ENCODE measurements at regions of chr11 and their contacts with region 1.

Region 1: DNA sequence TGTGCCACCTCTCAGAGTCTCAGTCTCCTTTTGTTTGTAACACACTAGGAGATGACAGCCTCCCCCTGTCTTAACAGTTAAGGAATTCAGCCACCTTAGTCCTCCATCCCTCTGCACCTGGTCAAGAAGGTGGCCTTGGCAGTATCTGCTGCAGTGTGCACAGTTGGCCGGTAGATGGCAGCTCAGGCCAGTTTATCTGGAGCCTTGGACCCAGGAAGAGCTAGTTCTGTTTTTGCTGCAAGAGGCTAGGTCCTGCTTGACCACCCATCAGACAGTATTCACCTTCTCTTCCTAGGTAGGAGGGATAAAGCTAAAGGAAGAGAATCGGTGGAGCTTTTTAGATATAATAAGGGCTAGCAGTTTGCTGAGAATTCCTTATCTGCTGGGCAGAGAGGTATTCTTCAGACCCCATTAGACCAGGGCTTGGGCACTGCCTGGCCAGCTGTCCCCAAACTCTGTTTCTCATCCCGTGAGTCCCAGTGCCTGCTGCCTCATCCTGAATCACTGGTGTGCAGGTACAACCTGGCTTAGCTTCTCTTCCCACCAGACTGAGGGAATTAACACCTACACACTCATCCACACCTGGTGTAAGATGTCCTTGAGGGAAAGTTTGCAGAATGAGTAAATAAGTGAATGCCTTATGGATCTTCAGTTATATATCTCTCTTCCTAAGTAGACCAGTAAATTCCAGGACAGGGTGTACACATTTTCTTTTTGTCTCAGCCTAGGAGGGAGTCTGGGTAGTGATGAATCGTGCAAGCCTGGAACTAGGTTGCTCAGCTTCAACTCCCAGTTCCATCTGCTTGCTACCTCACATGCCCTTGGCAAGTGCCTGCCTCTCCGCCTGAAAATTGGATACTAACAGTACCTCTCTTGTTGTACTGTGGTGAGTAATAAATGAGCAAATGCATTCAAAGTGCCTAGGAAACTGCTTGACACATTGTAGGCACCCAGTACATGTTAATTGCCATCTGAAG is 70.8 kb upstream of the NARS2 start:
- DNase-seq: peak; percentile 72
- ATAC-seq: peak; percentile 70
- H3K4me3 Mint-ChIP-seq: no peak overlapping the region
- H3K27ac Mint-ChIP-seq: no peak overlapping the region
- H3K4me1 Mint-ChIP-seq: peaks cover 33% of the 10 kb centered on the region
- H3K27me3 Mint-ChIP-seq: no peaks in the 10 kb centered on the region
- CTCF ChIP-seq: peak; percentile 97

Region 2: DNA sequence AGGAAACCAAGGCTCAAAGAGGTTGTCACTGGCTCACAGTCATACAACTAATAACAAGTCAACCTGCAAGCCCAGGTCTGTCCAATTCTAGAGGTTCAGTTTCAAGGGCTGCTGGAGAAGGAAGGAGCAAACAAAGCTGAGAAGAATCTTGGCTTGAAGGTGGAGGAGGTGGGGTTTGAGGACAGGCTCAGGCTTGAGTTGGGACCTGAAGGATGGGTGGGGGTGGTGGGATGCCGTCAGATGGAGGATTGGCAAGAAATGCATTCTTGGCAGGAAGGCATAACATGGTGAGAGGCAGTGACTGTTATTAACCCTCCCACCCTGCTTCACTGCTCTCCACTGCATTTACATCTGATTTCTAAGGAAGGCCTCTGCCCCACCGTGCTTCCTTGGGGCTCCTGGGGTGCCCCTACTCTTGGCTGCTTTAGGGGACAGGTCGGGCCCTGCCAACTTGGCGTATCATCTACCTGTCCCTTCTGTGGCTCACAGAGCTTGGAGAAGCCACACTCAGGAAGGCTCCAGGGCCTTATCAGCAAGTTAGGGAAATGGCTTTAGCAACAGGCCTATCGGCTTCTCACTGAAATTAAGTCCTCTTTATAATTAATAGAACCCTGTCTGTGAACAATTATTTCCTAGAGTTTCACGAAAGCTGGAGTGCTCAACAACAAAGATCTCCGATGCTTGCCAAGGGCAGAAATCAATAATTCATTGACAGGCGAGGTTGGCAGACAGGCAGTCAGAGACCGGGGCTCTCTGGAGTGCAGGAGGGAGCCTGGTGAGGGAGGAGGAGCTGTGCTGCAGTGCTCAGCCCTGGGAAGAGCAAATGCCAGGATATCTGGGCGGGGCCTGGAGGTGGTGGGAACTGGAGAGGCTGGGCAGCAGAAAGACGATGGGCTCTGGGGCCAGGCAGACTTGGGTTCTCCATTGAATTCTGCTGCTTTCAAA is 14.1 kb after region 1 on chr11:
- CTCF ChIA-PET with region 1: interaction called, 76 read pairs
- POLR2A ChIA-PET with region 1: no interaction called
- intact Hi-C with region 1: no loop called
- DNase-seq: no peak
- ATAC-seq: no peak
- H3K4me3 Mint-ChIP-seq: no peak overlapping the region
- H3K27ac Mint-ChIP-seq: no peak overlapping the region
- H3K4me1 Mint-ChIP-seq: peaks cover 3% of the 10 kb centered on the region
- H3K27me3 Mint-ChIP-seq: peaks cover 8% of the 10 kb centered on the region
- CTCF ChIP-seq: no peak

Region 3: DNA sequence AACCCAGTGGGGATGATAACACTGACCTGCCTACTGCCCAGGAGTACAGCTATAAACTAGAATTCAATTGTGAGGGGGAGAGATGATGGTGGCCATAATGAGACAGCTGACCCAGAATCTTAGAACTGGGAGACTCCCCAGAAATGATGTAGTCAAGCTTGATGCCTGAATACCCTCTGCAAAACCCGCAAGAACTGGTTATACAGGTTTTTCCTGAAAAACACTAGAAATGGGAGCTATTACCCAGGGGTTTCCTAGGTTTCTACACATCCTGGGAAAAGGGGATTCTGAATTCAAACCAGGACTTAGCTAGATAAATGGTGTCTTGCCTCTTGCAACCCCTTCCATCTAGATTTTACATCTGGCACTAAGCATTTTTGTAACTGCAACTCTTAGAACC is 43.0 kb after region 1 on chr11:
- CTCF ChIA-PET with region 1: interaction called, 11 read pairs
- POLR2A ChIA-PET with region 1: no interaction called
- intact Hi-C with region 1: no loop called
- DNase-seq: no peak
- ATAC-seq: no peak
- H3K4me3 Mint-ChIP-seq: no peak overlapping the region
- H3K27ac Mint-ChIP-seq: no peak overlapping the region
- H3K4me1 Mint-ChIP-seq: no peaks in the 10 kb centered on the region
- H3K27me3 Mint-ChIP-seq: peaks cover 18% of the 10 kb centered on the region
- CTCF ChIP-seq: no peak

Region 4: GRCh38 chr11:78722786-78723185 is 77.3 kb after region 1 on chr11:
- CTCF ChIA-PET with region 1: interaction called, 160 read pairs
- POLR2A ChIA-PET with region 1: no interaction called
- intact Hi-C with region 1: no loop called
- DNase-seq: no peak
- ATAC-seq: no peak
- H3K4me3 Mint-ChIP-seq: no peak overlapping the region
- H3K27ac Mint-ChIP-seq: no peak overlapping the region
- H3K4me1 Mint-ChIP-seq: no peaks in the 10 kb centered on the region
- H3K27me3 Mint-ChIP-seq: peaks cover 5% of the 10 kb centered on the region
- CTCF ChIP-seq: no peak

Region 5: DNA sequence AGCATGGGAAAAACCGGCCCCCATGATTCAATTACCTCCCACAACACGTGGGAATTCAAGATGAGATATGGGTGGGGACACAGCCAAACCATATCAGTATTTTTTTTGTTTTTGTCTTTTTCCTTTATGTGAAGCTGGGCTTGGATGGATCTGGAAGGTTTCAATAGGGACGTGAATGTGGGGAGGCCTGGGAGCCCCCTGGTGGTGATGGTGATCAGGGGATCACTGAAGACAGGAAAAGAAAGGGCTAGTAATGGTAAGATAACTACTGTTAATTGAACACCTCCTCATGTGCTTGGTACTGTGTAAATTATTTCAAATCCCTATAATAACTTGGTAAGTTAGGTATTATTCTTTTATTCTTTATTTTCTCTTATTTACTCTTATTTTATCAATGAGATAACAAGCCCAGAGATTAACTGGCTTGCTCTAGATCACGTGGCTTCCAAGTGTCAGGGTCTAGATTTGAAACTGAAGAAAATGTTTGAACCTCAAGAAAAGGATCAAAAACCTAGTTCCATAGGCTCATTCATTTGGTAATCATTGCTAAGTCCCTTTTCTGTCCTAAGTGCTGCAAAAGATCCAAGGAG is 431.1 kb after region 1 on chr11:
- CTCF ChIA-PET with region 1: interaction called, 13 read pairs
- POLR2A ChIA-PET with region 1: no interaction called
- intact Hi-C with region 1: no loop called
- DNase-seq: peak; percentile 51
- ATAC-seq: no peak
- H3K4me3 Mint-ChIP-seq: no peak overlapping the region
- H3K27ac Mint-ChIP-seq: no peak overlapping the region
- H3K4me1 Mint-ChIP-seq: no peaks in the 10 kb centered on the region
- H3K27me3 Mint-ChIP-seq: peaks cover 1% of the 10 kb centered on the region
- CTCF ChIP-seq: peak; percentile 72

Measured in activated CD8-positive, alpha-beta T cell treated with anti-CD3 and anti-CD28 coated beads for 36 hours (primary cell).